ENCODE measurements at regions of chr1 and their contacts with region 1.

Region 1: GRCh38 chr1:7752512-7753417 is 18.3 kb upstream of the VAMP3 start:
- DNase-seq: no peak
- ATAC-seq: peak; percentile 69
- H3K4me3 ChIP-seq: no peak overlapping the region
- H3K27ac ChIP-seq: no peak overlapping the region
- H3K4me1 ChIP-seq: no peaks in the 10 kb centered on the region
- H3K27me3 ChIP-seq: peaks cover 0 to 3% of the 10 kb centered on the region in 2 experiments; a peak in 1 of 4 replicates
- CTCF ChIP-seq: peak; percentile 67 to 77 (median 70)
- EP300 ChIP-seq: no peak
- POLR2A ChIP-seq: no peak
- RAD21 ChIP-seq: peak; percentile 55

Region 2: DNA sequence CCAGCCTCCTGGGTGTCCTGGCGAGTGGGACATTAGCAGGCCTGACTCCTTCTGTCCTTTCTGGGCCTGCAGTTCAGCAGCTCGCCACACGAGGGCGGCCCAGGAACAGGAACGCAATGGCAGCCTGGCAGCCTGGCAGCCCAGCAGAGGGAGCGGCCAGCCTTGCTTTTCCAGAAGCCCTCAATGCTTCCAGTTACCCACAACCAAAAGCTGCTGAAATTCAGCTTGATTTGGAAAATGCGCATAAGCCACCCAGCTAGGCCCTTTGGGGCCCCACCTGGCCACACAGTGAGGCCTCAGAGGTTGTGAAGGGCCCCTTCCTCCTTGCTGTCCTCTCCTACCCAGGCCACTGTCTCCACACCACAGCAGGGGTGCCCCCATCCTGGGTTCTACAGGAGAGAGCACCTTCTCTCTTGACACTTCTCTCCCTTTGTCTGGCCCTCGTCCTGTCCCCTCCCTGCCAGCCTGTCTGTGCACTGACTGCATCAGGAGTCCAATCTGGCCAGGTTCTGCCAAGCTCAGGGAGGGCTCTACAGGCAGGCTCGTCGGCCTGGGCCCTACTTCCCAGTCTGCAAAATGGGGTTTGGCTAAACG is 85.0 kb before region 1 on chr1:
- CTCF ChIA-PET with region 1: interaction called, 208 read pairs
- POLR2A ChIA-PET with region 1: no interaction called
- RAD21 ChIA-PET with region 1: interaction called, 45 read pairs
- SMC1A ChIA-PET with region 1: interaction called, 55 read pairs
- in situ Hi-C with region 1: loop called (anchors 5 kb)
- intact Hi-C with region 1: loop called (anchors 1 kb)
- DNase-seq: peak; percentile 11
- ATAC-seq: peak; percentile 93
- H3K4me3 ChIP-seq: no peak overlapping the region
- H3K27ac ChIP-seq: no peak overlapping the region
- H3K4me1 ChIP-seq: no peaks in the 10 kb centered on the region
- H3K27me3 ChIP-seq: no peaks in the 10 kb centered on the region; a peak in 1 of 4 replicates
- CTCF ChIP-seq: peak; percentile 98 to 99 (median 99); a peak in 5 of 6 replicates
- EP300 ChIP-seq: no peak
- POLR2A ChIP-seq: no peak
- RAD21 ChIP-seq: peak; percentile 95

Region 3: GRCh38 chr1:7770997-7771822 is 18.4 kb after region 1 on chr1 and contains the start of gene VAMP3:
- CTCF ChIA-PET with region 1: interaction called, 28 read pairs
- POLR2A ChIA-PET with region 1: interaction called, 7 read pairs
- RAD21 ChIA-PET with region 1: no interaction called
- SMC1A ChIA-PET with region 1: interaction called, 6 read pairs
- in situ Hi-C with region 1: no loop called
- intact Hi-C with region 1: no loop called
- DNase-seq: peak; percentile 30
- ATAC-seq: peak; percentile 92
- H3K4me3 ChIP-seq: peak within 1 kb of the TSS; percentile 95
- H3K27ac ChIP-seq: peak within 1 kb of the TSS; percentile 74
- H3K4me1 ChIP-seq: no peaks in the 10 kb centered on the region
- H3K27me3 ChIP-seq: no peaks in the 10 kb centered on the region; a peak in 1 of 4 replicates
- CTCF ChIP-seq: no peak
- EP300 ChIP-seq: no peak
- POLR2A ChIP-seq: peak; percentile 83
- RAD21 ChIP-seq: no peak
- polyA plus RNA-seq, gene VAMP3: 4.8 to 5.5 TPM

Measured in GM12878 (cell line).